H1 (cell line): ENCODE measurements at regions of chr5 and their contacts with region 1.

Region 1: GRCh38 chr5:35651002-35651756 is 33.5 kb downstream of the SPEF2 start:
- DNase-seq: peak; percentile 3 to 47
- H3K4me3 ChIP-seq: no peak overlapping the region
- H3K27ac ChIP-seq: no peak overlapping the region
- H3K4me1 ChIP-seq: 0 out of 7 replicates have a peak, but pooled peaks cover 0 to 3% (median 0%) of the 10 kb centered on the region in 4 experiments
- H3K27me3 ChIP-seq: peaks cover 0 to 2% (median 0%) of the 10 kb centered on the region in 4 experiments; a peak in 1 of 7 replicates
- CTCF ChIP-seq: peak; percentile 10 to 66 (median 59)
- EP300 ChIP-seq: no peak
- POLR2A ChIP-seq: no peak
- RAD21 ChIP-seq: peak; percentile 55 to 70; a peak in 3 of 4 replicates

Region 2: DNA sequence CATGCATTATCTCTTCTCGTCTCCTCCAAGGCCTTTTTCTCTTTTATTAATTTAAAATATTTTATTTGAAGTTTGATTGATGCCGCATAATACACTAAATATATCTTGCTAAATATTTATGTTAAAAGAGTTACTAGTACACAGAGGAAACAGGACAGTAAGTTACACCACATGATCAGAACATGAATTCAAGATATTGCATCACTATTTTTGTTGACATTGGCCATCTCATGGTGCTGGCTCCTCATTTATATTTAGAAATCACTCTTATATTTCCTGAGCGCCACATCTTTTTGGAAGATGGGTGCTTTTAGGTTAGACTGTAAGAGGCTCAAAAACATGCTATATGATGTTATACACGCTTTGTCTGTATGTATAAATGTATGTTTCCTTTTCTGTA is 10.6 kb before region 1 on chr5:
- CTCF ChIA-PET with region 1: interaction called, 10 read pairs
- POLR2A ChIA-PET with region 1: no interaction called
- DNase-seq: no peak
- H3K4me3 ChIP-seq: no peak overlapping the region
- H3K27ac ChIP-seq: no peak overlapping the region
- H3K4me1 ChIP-seq: no peaks in the 10 kb centered on the region
- H3K27me3 ChIP-seq: no peaks in the 10 kb centered on the region
- CTCF ChIP-seq: no peak
- EP300 ChIP-seq: no peak
- POLR2A ChIP-seq: no peak
- RAD21 ChIP-seq: no peak

Region 3: GRCh38 chr5:35741126-35741716 is 90.0 kb after region 1 on chr5:
- CTCF ChIA-PET with region 1: no interaction called
- POLR2A ChIA-PET with region 1: no interaction called
- DNase-seq: no peak
- H3K4me3 ChIP-seq: no peak overlapping the region
- H3K27ac ChIP-seq: no peak overlapping the region
- H3K4me1 ChIP-seq: no peaks in the 10 kb centered on the region
- H3K27me3 ChIP-seq: peaks cover 0 to 11% (median 5%) of the 10 kb centered on the region in 4 experiments; a peak in 2 of 7 replicates
- CTCF ChIP-seq: no peak
- EP300 ChIP-seq: no peak
- POLR2A ChIP-seq: no peak
- RAD21 ChIP-seq: no peak

Region 4: GRCh38 chr5:35789732-35790456 is 138.7 kb after region 1 on chr5:
- CTCF ChIA-PET with region 1: no interaction called
- POLR2A ChIA-PET with region 1: no interaction called
- DNase-seq: no peak
- H3K4me3 ChIP-seq: no peak overlapping the region
- H3K27ac ChIP-seq: no peak overlapping the region
- H3K4me1 ChIP-seq: peaks cover 0 to 6% (median 2%) of the 10 kb centered on the region in 4 experiments; a peak in 2 of 7 replicates
- H3K27me3 ChIP-seq: no peaks in the 10 kb centered on the region
- CTCF ChIP-seq: no peak
- EP300 ChIP-seq: no peak
- POLR2A ChIP-seq: no peak
- RAD21 ChIP-seq: no peak